CD8-positive, alpha-beta memory T cell (primary cell): ENCODE measurements at regions of chr6 and their contacts with region 1.

Region 1: GRCh38 chr6:24933868-24934401 is 1.8 kb downstream of the RIPOR2 start:
- DNase-seq: peak in 4 of 5 donors; percentile 39 to 75 (median 61)
- H3K4me3 ChIP-seq: peak overlapping the region; percentile 72
- H3K4me3 Mint-ChIP-seq: peak overlapping the region; percentile 85 to 99 (median 99)
- H3K27ac ChIP-seq: peak overlapping the region; percentile 64
- H3K27ac Mint-ChIP-seq: peak overlapping the region; percentile 84 to 97 (median 90)
- H3K4me1 ChIP-seq: peaks cover 45% of the 10 kb centered on the region
- H3K4me1 Mint-ChIP-seq: peaks cover 54 to 65% (median 64%) of the 10 kb centered on the region in 3 donors
- H3K27me3 ChIP-seq: no peaks in the 10 kb centered on the region
- H3K27me3 Mint-ChIP-seq: no peaks in the 10 kb centered on the region

Region 2: GRCh38 chr6:24855395-24856245 is 78.3 kb before region 1 on chr6:
- CTCF ChIA-PET with region 1: interaction called, 26 read pairs
- POLR2A ChIA-PET with region 1: interaction called, 3 read pairs
- DNase-seq: peak; percentile 43 to 78 (median 68)
- H3K4me3 ChIP-seq: no peak overlapping the region
- H3K4me3 Mint-ChIP-seq: peak overlapping the region in 6 of 7 donors; percentile 35 to 69 (median 60)
- H3K27ac ChIP-seq: no peak overlapping the region
- H3K27ac Mint-ChIP-seq: peak overlapping the region; percentile 47 to 95 (median 87)
- H3K4me1 ChIP-seq: peaks cover 55% of the 10 kb centered on the region
- H3K4me1 Mint-ChIP-seq: peaks cover 53 to 57% (median 56%) of the 10 kb centered on the region in 3 donors
- H3K27me3 ChIP-seq: no peaks in the 10 kb centered on the region
- H3K27me3 Mint-ChIP-seq: peaks cover 0 to 2% of the 10 kb centered on the region in 2 donors

Region 3: GRCh38 chr6:24902782-24903181 is 31.2 kb before region 1 on chr6:
- CTCF ChIA-PET with region 1: interaction called, 46 read pairs
- POLR2A ChIA-PET with region 1: interaction called, 3 read pairs
- DNase-seq: no peak
- H3K4me3 ChIP-seq: no peak overlapping the region
- H3K4me3 Mint-ChIP-seq: peak overlapping the region in 6 of 7 donors; percentile 10 to 79 (median 52)
- H3K27ac ChIP-seq: no peak overlapping the region
- H3K27ac Mint-ChIP-seq: peak overlapping the region; percentile 60 to 98 (median 89)
- H3K4me1 ChIP-seq: peaks cover 96% of the 10 kb centered on the region
- H3K4me1 Mint-ChIP-seq: peaks cover 93 to 100% (median 98%) of the 10 kb centered on the region in 3 donors
- H3K27me3 ChIP-seq: no peaks in the 10 kb centered on the region
- H3K27me3 Mint-ChIP-seq: no peaks in the 10 kb centered on the region

Region 4: DNA sequence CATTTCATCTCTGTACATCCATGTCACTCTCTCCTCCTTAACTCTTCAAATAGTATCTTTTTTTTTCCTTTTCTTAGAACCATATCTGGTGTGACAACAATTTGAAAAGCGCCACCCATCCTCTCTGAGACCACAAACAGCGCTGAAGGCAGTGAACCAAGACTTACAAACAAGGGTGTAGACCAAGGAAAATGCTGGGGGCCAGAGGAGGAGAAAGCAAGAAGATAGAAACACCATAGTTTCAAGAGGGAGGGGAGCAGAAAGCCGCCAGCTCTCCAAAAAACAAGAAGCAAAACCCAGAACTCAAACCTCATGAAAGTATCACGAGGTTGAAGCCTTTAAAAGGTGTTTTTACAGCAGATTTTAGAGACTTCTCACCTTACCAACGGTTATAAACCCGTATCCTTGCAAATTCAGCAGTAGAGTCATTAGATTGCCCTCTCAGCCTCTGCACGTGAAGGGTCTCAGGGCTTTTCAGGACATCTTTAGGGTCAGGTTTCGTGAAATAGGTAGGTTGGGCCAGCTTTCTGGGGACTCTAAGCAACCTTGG is 15.2 kb after region 1 on chr6:
- CTCF ChIA-PET with region 1: interaction called, 192 read pairs
- POLR2A ChIA-PET with region 1: interaction called, 117 read pairs
- DNase-seq: peak in 4 of 5 donors; percentile 21 to 83 (median 80)
- H3K4me3 ChIP-seq: peak overlapping the region; percentile 40
- H3K4me3 Mint-ChIP-seq: peak overlapping the region; percentile 44 to 75 (median 68)
- H3K27ac ChIP-seq: peak overlapping the region; percentile 3
- H3K27ac Mint-ChIP-seq: peak overlapping the region; percentile 78 to 99 (median 91)
- H3K4me1 ChIP-seq: peaks cover 77% of the 10 kb centered on the region
- H3K4me1 Mint-ChIP-seq: peaks cover 77 to 92% (median 92%) of the 10 kb centered on the region in 3 donors
- H3K27me3 ChIP-seq: no peaks in the 10 kb centered on the region
- H3K27me3 Mint-ChIP-seq: no peaks in the 10 kb centered on the region

Region 5: GRCh38 chr6:24974182-24975171 is 40.5 kb after region 1 on chr6:
- CTCF ChIA-PET with region 1: interaction called, 61 read pairs
- POLR2A ChIA-PET with region 1: no interaction called
- DNase-seq: peak in 2 of 5 donors; percentile 45 to 66
- H3K4me3 ChIP-seq: no peak overlapping the region
- H3K4me3 Mint-ChIP-seq: peak overlapping the region in 6 of 7 donors; percentile 58 to 79 (median 66)
- H3K27ac ChIP-seq: peak overlapping the region; percentile 0
- H3K27ac Mint-ChIP-seq: peak overlapping the region; percentile 66 to 98 (median 94)
- H3K4me1 ChIP-seq: peaks cover 48% of the 10 kb centered on the region
- H3K4me1 Mint-ChIP-seq: peaks cover 67 to 83% (median 81%) of the 10 kb centered on the region in 3 donors
- H3K27me3 ChIP-seq: no peaks in the 10 kb centered on the region
- H3K27me3 Mint-ChIP-seq: no peaks in the 10 kb centered on the region

Region 6: GRCh38 chr6:25027221-25027916 is 93.4 kb after region 1 on chr6:
- CTCF ChIA-PET with region 1: interaction called, 19 read pairs
- POLR2A ChIA-PET with region 1: no interaction called
- DNase-seq: peak; percentile 63 to 85 (median 67)
- H3K4me3 ChIP-seq: peak overlapping the region; percentile 44
- H3K4me3 Mint-ChIP-seq: peak overlapping the region; percentile 63 to 90 (median 81)
- H3K27ac ChIP-seq: peak overlapping the region; percentile 11
- H3K27ac Mint-ChIP-seq: peak overlapping the region; percentile 78 to 96 (median 88)
- H3K4me1 ChIP-seq: peaks cover 35% of the 10 kb centered on the region
- H3K4me1 Mint-ChIP-seq: peaks cover 58 to 74% (median 61%) of the 10 kb centered on the region in 3 donors
- H3K27me3 ChIP-seq: no peaks in the 10 kb centered on the region
- H3K27me3 Mint-ChIP-seq: no peaks in the 10 kb centered on the region

Region 7: GRCh38 chr6:25369433-25370181 is 435.7 kb after region 1 on chr6:
- CTCF ChIA-PET with region 1: no interaction called
- POLR2A ChIA-PET with region 1: no interaction called
- DNase-seq: peak in 1 of 5 donors; percentile 49
- H3K4me3 ChIP-seq: peak overlapping the region; percentile 42
- H3K4me3 Mint-ChIP-seq: peak overlapping the region in 6 of 7 donors; percentile 43 to 74 (median 68)
- H3K27ac ChIP-seq: no peak overlapping the region
- H3K27ac Mint-ChIP-seq: peak overlapping the region in 7 of 8 donors; percentile 6 to 97 (median 56)
- H3K4me1 ChIP-seq: peaks cover 48% of the 10 kb centered on the region
- H3K4me1 Mint-ChIP-seq: peaks cover 47 to 83% (median 70%) of the 10 kb centered on the region in 3 donors
- H3K27me3 ChIP-seq: no peaks in the 10 kb centered on the region
- H3K27me3 Mint-ChIP-seq: no peaks in the 10 kb centered on the region

Region 8: GRCh38 chr6:25749837-25750236 is 815.9 kb after region 1 on chr6:
- CTCF ChIA-PET with region 1: no interaction called
- POLR2A ChIA-PET with region 1: no interaction called
- DNase-seq: no peak
- H3K4me3 ChIP-seq: no peak overlapping the region
- H3K4me3 Mint-ChIP-seq: no peak overlapping the region
- H3K27ac ChIP-seq: no peak overlapping the region
- H3K27ac Mint-ChIP-seq: no peak overlapping the region
- H3K4me1 ChIP-seq: no peaks in the 10 kb centered on the region
- H3K4me1 Mint-ChIP-seq: no peaks in the 10 kb centered on the region
- H3K27me3 ChIP-seq: no peaks in the 10 kb centered on the region
- H3K27me3 Mint-ChIP-seq: peaks cover 0 to 2% of the 10 kb centered on the region in 2 donors